Activated B cell treated with CpG ODN at 0.5 μM for 24 hours (primary cell): ENCODE measurements at regions of chr19 and their contacts with region 1.

Region 1: GRCh38 chr19:40576585-40577451 is at the start of gene SHKBP1:
- DNase-seq: peak; percentile 89
- ATAC-seq: peak; percentile 94
- H3K4me3 Mint-ChIP-seq: peak within 1 kb of the TSS; percentile 88
- H3K27ac Mint-ChIP-seq: peak within 1 kb of the TSS; percentile 84
- H3K4me1 Mint-ChIP-seq: peaks cover 39% of the 10 kb centered on the region
- H3K27me3 Mint-ChIP-seq: no peaks in the 10 kb centered on the region
- CTCF ChIP-seq: no peak
- total RNA-seq, gene SHKBP1: 184 and 213 TPM in 2 replicates

Region 2: DNA sequence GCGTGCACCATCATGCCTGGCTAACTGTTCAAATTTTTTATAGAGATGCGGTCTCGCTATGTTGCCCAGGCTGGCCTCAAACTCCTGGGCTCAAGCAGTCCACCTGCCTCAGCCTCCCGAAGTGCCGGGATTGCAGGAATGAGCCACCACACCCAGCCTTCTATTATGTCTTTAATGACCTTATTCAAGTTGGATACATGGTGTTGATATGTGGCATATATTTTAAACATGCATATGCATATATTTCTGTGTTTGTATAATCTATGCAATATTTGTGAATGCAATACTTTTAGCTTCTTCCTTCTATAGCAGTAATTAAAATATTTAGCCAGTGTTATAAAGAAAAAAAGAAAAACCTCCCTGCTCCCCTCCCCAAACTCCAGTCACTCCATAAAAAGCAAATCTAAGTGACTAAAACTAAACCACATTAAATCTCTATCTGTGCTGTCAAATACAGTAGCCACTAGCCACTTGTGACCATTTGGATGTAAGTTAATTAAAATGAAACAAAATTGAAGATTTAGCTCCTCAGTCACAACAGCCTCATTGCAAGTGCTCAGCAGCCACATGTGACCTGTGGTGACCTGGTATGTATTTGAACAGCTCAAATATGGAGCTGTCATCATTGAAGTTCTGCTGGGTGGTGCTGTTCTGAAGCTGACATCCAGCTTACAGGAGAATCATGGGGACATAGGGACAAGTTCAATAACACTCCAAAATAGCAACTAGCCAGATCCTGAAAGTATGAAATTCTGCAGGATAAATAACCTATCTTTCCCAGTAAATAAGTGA is 669.8 kb before region 1 on chr19:
- CTCF ChIA-PET with region 1: no interaction called
- POLR2A ChIA-PET with region 1: no interaction called
- intact Hi-C with region 1: no loop called
- DNase-seq: no peak
- ATAC-seq: no peak
- H3K4me3 Mint-ChIP-seq: no peak overlapping the region
- H3K27ac Mint-ChIP-seq: no peak overlapping the region
- H3K4me1 Mint-ChIP-seq: peaks cover 5% of the 10 kb centered on the region
- H3K27me3 Mint-ChIP-seq: no peaks in the 10 kb centered on the region
- CTCF ChIP-seq: no peak

Region 3: DNA sequence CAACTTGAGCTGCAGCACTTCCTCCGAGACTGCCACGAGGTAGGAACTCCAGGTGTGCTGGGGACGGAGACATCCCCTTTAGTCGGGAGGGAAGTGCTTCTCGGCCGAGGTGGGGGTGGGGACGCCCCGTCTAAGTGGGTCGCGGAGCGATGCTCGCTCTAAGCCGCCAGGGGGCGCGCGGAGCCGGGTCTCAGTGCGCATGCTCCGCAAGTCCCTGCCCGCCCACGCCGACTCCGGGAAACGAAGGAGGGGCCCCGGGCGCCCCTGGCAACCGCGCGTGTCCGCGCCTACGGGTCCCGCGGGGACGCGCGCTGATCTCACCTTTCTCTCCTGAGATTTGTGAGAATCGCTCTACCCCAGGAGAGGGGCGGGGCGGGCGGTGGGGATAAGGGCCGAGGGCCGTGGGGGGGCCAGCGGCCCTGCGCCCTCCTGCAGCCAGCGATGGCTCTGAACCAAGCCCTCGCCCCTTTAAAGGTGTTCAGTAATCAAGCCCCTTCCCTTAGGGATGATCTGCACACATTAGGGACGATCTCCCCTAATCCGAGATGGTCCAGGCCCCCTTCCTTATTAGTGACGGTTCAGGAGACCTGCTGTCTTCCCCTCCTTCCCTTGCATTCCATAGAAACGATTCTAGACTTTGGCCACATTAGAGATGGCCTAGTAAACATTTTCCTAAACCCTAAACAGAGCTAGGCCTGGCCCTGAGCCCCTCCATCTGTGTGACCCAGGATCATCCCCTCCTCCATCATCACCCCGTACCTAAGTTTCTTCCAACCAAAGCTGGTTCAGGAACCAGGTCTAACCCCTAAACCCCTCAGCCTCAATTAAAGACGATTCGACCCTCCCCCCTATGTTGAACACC is 47.5 kb before region 1 on chr19:
- CTCF ChIA-PET with region 1: no interaction called
- POLR2A ChIA-PET with region 1: no interaction called
- intact Hi-C with region 1: loop called (anchors 1 kb)
- DNase-seq: peak; percentile 91
- ATAC-seq: peak; percentile 91
- H3K4me3 Mint-ChIP-seq: peak overlapping the region; percentile 42
- H3K27ac Mint-ChIP-seq: no peak overlapping the region
- H3K4me1 Mint-ChIP-seq: peaks cover 18% of the 10 kb centered on the region
- H3K27me3 Mint-ChIP-seq: peaks cover 33% of the 10 kb centered on the region
- CTCF ChIP-seq: no peak

Region 4: GRCh38 chr19:40603389-40604135 is 26.7 kb after region 1 on chr19:
- CTCF ChIA-PET with region 1: interaction called, 5 read pairs
- POLR2A ChIA-PET with region 1: interaction called, 24 read pairs
- intact Hi-C with region 1: loop called (anchors 1 kb)
- DNase-seq: peak; percentile 90
- ATAC-seq: peak; percentile 72
- H3K4me3 Mint-ChIP-seq: peak overlapping the region; percentile 85
- H3K27ac Mint-ChIP-seq: peak overlapping the region; percentile 77
- H3K4me1 Mint-ChIP-seq: peaks cover 69% of the 10 kb centered on the region
- H3K27me3 Mint-ChIP-seq: peaks cover 22% of the 10 kb centered on the region
- CTCF ChIP-seq: no peak